ENCODE measurements at regions of chr9 and their contacts with region 1.

Region 1: DNA sequence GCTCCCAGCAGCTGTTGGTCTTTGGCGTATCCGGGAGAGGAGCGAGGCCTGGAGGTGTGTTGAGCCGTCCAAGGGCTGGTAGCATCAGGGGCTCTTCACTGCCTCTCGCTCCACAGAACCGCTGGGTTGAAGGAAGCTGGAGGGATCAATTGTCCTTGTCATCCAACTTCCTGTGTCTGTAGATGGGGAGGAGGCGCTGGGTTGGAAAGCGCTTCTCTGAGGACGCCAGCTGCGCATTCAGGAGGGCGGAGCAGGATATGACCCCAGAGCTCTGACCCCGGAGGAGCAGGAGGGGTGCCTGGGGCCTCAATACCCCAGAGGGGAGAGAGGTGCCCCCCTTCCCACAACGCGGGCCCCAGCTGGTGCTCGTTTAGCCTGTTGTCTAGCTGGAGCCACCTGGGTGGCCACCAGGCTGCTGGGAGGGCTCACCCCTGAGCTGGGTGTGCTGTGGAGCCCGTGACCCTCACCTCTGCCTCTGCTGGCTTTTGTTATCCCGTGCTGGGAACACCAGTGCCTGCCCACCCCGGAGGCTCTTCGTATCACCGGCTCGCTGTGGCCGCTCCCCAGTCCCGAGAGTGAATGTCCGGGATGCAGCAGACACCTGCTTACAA is 2.0 kb upstream of the DBH start:
- DNase-seq: no peak
- H3K4me3 ChIP-seq: no peak overlapping the region
- H3K27ac ChIP-seq: peak overlapping the region in 1 of 2 experiments; percentile 100; a peak in 2 of 4 replicates
- H3K4me1 ChIP-seq: peaks cover 0 to 69% of the 10 kb centered on the region in 2 experiments; a peak in 2 of 4 replicates
- H3K27me3 ChIP-seq: peaks cover 37% of the 10 kb centered on the region
- CTCF ChIP-seq: no peak
- EP300 ChIP-seq: no peak
- RAD21 ChIP-seq: no peak

Region 2: DNA sequence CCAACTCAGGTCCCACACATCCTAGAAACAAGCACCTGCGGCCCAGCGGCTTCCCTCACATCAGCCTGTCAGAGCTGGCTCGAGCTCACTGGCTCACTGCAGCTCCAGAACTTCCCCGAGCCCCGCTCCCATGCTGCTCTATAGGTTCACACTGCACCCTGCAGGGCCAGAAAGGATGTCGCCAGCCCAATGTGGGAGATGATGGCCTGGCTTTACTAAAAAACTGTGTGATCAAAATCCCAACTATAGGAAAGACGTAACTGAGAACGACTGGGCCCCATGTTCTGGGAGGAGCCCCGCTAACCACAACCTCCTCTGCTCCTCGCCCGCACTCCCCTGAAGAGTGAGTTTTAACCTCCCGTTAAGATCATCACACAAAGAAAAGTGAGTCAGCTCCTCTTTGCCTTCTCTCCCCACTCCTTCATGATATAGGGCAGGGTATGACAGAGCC is 262.9 kb before region 1 on chr9:
- CTCF ChIA-PET with region 1: no interaction called
- POLR2A ChIA-PET with region 1: no interaction called
- DNase-seq: no peak
- H3K4me3 ChIP-seq: no peak overlapping the region
- H3K27ac ChIP-seq: no peak overlapping the region
- H3K4me1 ChIP-seq: peaks cover 5 to 44% of the 10 kb centered on the region in 2 experiments; a peak in 3 of 4 replicates
- H3K27me3 ChIP-seq: no peaks in the 10 kb centered on the region
- CTCF ChIP-seq: no peak
- EP300 ChIP-seq: no peak
- RAD21 ChIP-seq: no peak

Region 3: GRCh38 chr9:133514460-133515238 is 119.5 kb before region 1 on chr9:
- CTCF ChIA-PET with region 1: interaction called, 4 read pairs
- POLR2A ChIA-PET with region 1: interaction called, 24 read pairs
- DNase-seq: peak; percentile 85
- H3K4me3 ChIP-seq: peak overlapping the region in 1 of 2 experiments; percentile 22; a peak in 1 of 4 replicates
- H3K27ac ChIP-seq: peak overlapping the region in 1 of 2 experiments; percentile 99; a peak in 2 of 4 replicates
- H3K4me1 ChIP-seq: peaks cover 0 to 70% of the 10 kb centered on the region in 2 experiments; a peak in 2 of 4 replicates
- H3K27me3 ChIP-seq: no peaks in the 10 kb centered on the region
- CTCF ChIP-seq: no peak
- EP300 ChIP-seq: no peak
- RAD21 ChIP-seq: no peak

Region 4: GRCh38 chr9:133581513-133582343 is 52.5 kb before region 1 on chr9:
- CTCF ChIA-PET with region 1: interaction called, 11 read pairs
- POLR2A ChIA-PET with region 1: interaction called, 94 read pairs
- DNase-seq: peak; percentile 89
- H3K4me3 ChIP-seq: no peak overlapping the region
- H3K27ac ChIP-seq: peak overlapping the region in 1 of 2 experiments; percentile 100; a peak in 2 of 4 replicates
- H3K4me1 ChIP-seq: peaks cover 0 to 87% of the 10 kb centered on the region in 2 experiments; a peak in 3 of 4 replicates
- H3K27me3 ChIP-seq: peaks cover 16% of the 10 kb centered on the region
- CTCF ChIP-seq: no peak
- EP300 ChIP-seq: peak in 1 of 2 experiments; percentile 83; a peak in 2 of 4 replicates
- RAD21 ChIP-seq: peak; percentile 20

Region 5: GRCh38 chr9:133604214-133604613 is 30.0 kb before region 1 on chr9:
- CTCF ChIA-PET with region 1: interaction called, 12 read pairs
- POLR2A ChIA-PET with region 1: interaction called, 261 read pairs
- DNase-seq: peak; percentile 64
- H3K4me3 ChIP-seq: no peak overlapping the region
- H3K27ac ChIP-seq: peak overlapping the region in 1 of 2 experiments; percentile 86; a peak in 2 of 4 replicates
- H3K4me1 ChIP-seq: peaks cover 0 to 74% of the 10 kb centered on the region in 2 experiments; a peak in 1 of 4 replicates
- H3K27me3 ChIP-seq: peaks cover 18% of the 10 kb centered on the region
- CTCF ChIP-seq: no peak
- EP300 ChIP-seq: no peak
- RAD21 ChIP-seq: peak; percentile 71

Region 6: DNA sequence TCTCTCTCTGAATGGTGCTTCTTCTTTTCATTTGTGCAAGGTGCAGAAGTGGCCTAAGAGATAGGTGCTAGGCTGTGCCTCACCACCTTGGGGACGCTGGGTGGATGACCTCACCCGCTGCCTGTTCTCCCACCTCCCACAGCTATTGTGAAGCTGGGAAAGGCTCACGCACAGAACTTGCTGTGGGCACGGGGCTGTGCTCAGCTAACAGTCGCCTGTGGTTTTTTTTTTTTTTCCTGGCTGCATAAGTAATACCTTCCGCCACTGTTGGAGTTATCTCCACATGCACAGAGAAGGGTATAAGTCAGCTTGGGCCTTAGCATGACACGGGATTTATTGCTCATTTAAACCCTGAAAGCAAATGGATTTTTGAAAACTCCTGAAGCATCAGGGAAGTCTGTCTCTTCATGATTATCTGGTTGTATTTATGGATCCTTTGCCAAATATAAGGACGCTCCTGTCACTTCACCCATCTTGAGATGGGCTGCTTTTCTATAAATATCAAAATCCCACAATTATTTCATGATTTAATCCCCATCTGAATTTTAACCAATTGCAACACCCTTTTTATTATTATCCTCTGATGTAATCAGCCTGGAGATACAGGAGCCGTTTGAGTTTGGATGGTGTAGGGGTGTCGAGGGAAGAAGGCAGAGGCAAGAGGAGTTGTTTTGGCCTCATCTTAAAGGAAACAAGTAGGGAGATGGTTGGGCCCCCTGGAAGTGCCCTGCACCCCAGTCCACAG is 11.0 kb after region 1 on chr9:
- CTCF ChIA-PET with region 1: interaction called, 5 read pairs
- POLR2A ChIA-PET with region 1: interaction called, 17 read pairs
- DNase-seq: no peak
- H3K4me3 ChIP-seq: no peak overlapping the region; a peak in 1 of 4 replicates
- H3K27ac ChIP-seq: peak overlapping the region in 1 of 2 experiments; percentile 55; a peak in 2 of 4 replicates
- H3K4me1 ChIP-seq: peaks cover 0 to 75% of the 10 kb centered on the region in 2 experiments; a peak in 1 of 4 replicates
- H3K27me3 ChIP-seq: peaks cover 20% of the 10 kb centered on the region; the same call in 1 of the 2 replicates
- CTCF ChIP-seq: no peak
- EP300 ChIP-seq: no peak
- RAD21 ChIP-seq: no peak

Region 7: DNA sequence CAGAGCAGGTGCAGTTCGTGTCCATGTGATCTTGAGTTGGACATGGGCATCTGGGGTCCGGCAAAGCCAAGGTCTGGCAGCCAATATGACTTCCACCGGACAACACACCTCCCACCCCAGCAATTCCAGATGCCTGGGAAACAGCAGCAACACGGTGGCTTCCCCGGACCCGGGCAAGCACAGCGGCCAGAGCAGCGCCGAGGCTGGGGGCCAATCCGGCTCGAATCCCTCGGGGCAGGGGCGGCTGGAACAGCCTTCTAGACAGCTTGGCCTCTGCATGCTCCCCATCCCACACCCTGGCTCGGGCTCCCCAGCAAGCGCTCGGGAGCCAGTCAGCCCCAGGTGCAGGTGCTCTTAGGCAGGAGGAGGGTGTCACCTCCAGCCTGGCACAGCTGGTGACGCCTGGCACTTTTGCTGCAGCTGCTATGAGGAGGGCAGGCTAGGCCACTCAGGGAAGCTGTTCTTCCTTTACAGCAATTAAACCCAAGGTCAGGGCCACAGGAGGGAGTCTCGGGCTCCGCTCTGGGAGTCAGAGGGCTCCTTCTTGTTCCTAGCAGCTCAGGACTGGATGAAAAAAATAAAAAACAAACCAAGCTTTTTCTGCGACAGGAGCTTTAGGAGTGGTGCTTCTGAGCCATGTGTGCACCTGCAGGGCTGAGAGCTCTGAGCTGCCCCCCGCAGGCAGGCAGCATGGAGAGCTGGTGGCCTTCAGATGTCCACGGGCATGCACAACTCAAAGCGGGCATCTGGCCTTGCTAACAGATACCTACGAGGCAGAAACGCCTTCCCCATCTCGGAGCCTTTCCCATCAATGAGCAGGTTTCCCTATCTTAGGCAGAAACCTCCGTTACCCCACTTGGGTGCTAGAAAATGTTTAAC is 30.2 kb after region 1 on chr9:
- CTCF ChIA-PET with region 1: interaction called, 5 read pairs
- POLR2A ChIA-PET with region 1: interaction called, 34 read pairs
- DNase-seq: peak; percentile 68
- H3K4me3 ChIP-seq: no peak overlapping the region
- H3K27ac ChIP-seq: peak overlapping the region in 1 of 2 experiments; percentile 85; a peak in 2 of 4 replicates
- H3K4me1 ChIP-seq: peaks cover 0 to 48% of the 10 kb centered on the region in 2 experiments; a peak in 1 of 4 replicates
- H3K27me3 ChIP-seq: no peaks in the 10 kb centered on the region
- CTCF ChIP-seq: no peak
- EP300 ChIP-seq: no peak
- RAD21 ChIP-seq: peak; percentile 51

Region 8: DNA sequence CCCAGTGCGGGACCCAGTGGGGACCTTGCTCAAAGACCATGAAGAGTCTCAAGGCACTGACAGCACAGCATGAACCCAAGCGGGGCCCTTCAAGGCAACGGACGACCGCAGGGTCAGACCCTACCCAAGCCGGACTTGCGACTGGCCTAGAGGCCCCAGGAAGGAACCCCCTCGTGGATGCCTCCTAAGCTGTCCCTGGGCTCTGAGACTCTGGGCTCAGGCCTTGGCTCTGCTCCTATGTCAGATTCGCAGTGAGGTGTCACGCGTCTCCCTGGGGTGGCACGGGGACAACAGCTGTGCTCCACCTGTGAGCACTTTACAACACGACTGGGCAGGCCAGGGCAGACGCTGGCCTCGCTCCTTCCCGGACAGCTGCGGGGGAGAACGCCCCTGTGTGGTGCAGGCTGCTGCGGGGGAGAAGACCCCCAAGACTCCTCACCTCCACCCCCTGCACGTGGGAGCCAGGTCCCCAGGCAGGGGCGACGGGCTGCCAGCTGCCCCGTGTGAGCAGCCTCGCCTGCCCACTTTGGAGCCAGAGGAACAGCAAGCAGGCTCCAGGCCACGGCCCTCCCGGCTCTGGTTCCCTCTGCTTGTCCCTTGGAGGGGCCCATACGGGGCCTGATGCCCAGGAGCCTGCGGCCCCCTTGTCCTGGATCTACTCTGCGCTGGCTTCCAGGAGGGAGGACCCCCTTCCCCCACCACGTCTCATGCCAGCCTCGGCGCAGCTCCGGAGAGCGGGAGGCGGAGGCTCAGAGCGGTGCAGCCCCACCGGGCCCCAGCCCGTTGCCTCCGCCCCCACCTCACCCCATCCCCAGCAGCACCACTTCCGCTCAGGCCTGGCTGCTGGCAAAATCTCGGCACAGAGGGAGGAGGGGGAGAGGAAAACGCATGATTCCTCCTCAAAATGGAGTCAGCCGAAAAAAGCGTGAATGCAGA is 67.9 kb after region 1 on chr9:
- CTCF ChIA-PET with region 1: no interaction called
- POLR2A ChIA-PET with region 1: no interaction called
- DNase-seq: no peak
- H3K4me3 ChIP-seq: no peak overlapping the region
- H3K27ac ChIP-seq: no peak overlapping the region
- H3K4me1 ChIP-seq: peaks cover 0 to 11% of the 10 kb centered on the region in 2 experiments; a peak in 1 of 4 replicates
- H3K27me3 ChIP-seq: no peaks in the 10 kb centered on the region
- CTCF ChIP-seq: no peak
- EP300 ChIP-seq: no peak
- RAD21 ChIP-seq: no peak

Region 9: DNA sequence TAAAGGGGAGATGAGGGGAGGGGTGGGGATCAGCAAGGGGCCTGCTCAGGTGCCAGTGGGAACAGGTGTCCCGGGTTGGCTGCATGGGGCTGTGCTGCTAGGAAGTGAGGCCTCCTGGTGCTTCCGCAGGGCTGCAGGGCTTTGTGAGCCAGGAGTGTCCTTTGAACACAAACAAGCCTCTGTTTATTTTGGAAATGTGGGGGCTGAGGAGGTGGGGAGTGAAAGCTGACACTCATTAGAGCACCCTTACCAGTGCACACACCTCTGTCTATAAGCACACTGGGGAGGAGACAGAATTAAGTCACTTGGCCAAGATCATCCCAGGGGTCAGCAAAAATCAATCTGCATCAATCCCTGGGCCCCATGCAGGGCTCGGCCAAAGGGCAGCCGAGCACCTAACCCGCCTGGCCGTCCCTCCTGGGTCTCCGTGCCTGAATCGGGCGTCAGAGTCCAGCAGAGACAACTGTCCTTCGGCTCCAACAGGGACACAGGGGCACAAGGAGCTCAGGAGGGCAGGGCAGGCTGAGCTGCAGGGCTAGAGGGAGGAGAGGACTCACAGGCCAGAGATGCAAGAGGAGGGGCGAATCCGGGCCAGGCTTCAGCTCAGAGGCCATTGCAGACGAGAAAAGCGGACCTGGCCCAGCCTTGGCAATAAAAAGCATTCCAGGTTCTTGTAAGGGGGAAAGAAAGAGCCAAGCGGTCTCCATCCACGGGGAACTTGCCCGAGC is 258.2 kb after region 1 on chr9:
- CTCF ChIA-PET with region 1: no interaction called
- POLR2A ChIA-PET with region 1: no interaction called
- DNase-seq: no peak
- H3K4me3 ChIP-seq: no peak overlapping the region
- H3K27ac ChIP-seq: peak overlapping the region in 1 of 2 experiments; percentile 16; a peak in 1 of 4 replicates
- H3K4me1 ChIP-seq: peaks cover 13 to 41% of the 10 kb centered on the region in 2 experiments; a peak in 2 of 4 replicates
- H3K27me3 ChIP-seq: no peaks in the 10 kb centered on the region
- CTCF ChIP-seq: no peak
- EP300 ChIP-seq: no peak
- RAD21 ChIP-seq: no peak

Measured in SK-N-SH (cell line).